Sciatic nerve (tissue), 2 donors: ENCODE measurements at regions of chr1 and their contacts with region 1.

Region 1: GRCh38 chr1:21939650-21940374 is 2.7 kb upstream of the HSPG2 start:
- DNase-seq: peak; percentile 94
- ATAC-seq: peak; percentile 46

Region 2: GRCh38 chr1:21904704-21905520 is 34.9 kb before region 1 on chr1:
- intact Hi-C with region 1: loop called (anchors 5 kb)
- DNase-seq: no peak
- ATAC-seq: no peak

Region 3: DNA sequence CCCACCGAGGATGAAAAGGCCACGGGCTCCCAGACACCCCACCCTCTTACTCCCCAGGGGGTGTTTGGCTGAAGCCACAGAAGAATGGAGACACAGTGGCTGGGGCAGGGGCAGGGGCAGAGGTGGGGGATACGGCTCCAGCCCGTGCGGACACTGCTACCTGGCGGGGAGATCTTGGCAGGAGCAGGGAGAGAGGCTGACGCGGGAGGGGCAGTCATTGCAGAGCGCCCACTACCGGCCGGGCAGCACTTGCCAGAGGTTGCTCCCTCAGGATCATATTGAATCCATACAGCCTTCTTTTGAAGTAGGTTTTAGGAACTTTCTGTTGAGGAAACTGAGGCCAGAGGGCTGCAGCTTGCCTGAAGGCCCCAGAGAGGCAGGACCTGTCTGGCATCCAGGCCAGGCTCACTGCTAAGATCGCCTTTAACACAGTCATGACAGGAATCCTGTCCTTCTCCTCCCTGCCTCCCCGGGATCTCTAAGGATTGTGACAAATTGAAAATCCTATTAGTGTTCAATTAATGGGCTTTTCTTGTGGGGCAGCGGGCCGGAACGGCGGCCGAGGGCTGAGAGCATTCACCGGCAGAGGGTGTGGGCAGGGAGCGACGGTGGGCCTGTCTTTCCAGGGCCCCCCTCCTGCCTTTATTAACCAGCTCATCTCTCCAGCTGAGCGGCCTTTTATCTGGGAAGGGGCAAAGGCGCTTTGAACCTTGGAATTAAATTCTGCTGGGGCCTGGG is 268.6 kb after region 1 on chr1:
- intact Hi-C with region 1: no loop called
- DNase-seq: peak; percentile 42
- ATAC-seq: no peak

Region 4: DNA sequence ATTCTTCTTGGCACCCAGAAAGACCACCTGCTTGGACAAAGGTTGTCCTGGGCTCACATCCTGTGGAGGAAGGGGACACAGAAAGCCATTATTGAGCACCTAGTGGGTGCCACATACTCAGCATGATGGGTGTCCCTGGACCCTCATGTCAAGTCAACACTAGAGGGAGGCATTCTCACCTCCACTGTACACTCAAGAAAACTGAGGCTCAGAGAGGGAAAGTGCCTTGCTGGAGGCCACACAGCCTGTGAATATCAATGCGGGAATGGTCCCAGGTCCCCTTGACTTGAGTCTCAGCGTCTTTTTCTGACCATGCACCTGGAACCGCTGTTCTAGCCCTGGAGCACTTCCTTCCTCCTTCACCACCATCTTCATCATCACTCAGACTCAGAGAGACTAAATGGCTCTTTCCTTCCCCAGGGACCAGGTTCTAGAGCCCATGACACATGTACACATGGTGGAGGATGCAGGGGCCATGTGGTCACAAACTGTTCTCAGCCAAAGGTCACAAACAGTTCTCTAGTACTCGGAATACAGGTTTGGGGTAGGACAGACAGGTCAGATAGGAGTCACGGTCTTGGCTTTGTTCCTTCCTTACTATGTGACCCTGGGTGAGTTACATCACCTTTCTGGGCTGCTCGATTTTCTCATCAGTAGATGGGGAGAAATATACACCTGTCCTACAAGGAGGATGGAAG is 292.3 kb after region 1 on chr1:
- intact Hi-C with region 1: no loop called
- DNase-seq: no peak
- ATAC-seq: no peak